ENCODE measurements at regions of chr19 and their contacts with region 1.

Region 1: GRCh38 chr19:4471403-4472173 is 509 bp upstream of the HDGFL2 start:
- DNase-seq: peak; percentile 98
- ATAC-seq: peak; percentile 90
- H3K4me3 Mint-ChIP-seq: no peak overlapping the region
- H3K27ac Mint-ChIP-seq: no peak overlapping the region
- H3K4me1 Mint-ChIP-seq: peaks cover 21% of the 10 kb centered on the region
- H3K27me3 Mint-ChIP-seq: no peaks in the 10 kb centered on the region

Region 2: DNA sequence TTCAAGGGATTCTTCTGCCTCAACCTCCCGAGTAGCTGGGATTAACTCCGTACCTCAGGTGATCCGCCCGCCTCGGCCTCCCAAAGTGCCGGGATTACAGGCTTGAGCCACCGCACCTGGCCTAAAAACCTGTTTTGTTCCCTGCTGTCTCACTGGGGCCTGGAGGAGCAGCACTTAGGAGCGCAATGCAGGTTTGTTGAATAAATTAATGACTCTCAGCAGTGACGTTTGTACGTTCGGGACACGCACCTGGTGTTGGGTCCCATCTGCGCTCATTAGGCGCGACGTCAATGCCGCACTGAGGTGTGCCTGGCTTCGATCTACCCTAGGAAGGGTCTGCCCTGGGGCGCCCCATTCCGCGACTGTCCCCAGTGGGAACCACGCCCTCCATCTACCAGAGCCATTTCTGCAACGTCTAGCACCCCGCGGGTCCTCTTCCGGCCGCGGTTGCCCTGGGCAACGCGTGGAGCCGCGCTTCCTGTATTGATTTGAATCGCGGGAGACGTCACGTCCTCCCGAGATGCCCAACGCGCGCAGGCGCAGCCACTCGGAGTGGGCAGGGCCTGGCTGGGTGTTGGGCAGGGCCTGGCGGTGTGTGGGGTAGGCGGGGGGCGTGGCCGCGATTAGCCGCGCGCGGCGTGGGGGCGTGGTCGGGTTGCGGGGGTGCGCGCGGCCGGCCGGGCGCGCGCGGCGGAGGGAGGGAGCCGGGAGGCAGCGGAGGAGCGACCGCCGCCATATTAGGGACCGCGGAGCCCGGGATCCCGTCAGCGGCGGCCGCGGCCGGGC is 965.8 kb before region 1 on chr19 and contains the start of gene FZR1:
- CTCF ChIA-PET with region 1: no interaction called
- POLR2A ChIA-PET with region 1: no interaction called
- intact Hi-C with region 1: loop called in 1 of 2 experiments (anchors 5 kb)
- DNase-seq: peak; percentile 100
- ATAC-seq: peak; percentile 92
- H3K4me3 Mint-ChIP-seq: peak within 1 kb of the TSS; percentile 84
- H3K27ac Mint-ChIP-seq: peak within 1 kb of the TSS; percentile 86
- H3K4me1 Mint-ChIP-seq: peaks cover 45% of the 10 kb centered on the region
- H3K27me3 Mint-ChIP-seq: no peaks in the 10 kb centered on the region
- total RNA-seq, gene FZR1: 40.8 to 50.7 TPM

Region 3: DNA sequence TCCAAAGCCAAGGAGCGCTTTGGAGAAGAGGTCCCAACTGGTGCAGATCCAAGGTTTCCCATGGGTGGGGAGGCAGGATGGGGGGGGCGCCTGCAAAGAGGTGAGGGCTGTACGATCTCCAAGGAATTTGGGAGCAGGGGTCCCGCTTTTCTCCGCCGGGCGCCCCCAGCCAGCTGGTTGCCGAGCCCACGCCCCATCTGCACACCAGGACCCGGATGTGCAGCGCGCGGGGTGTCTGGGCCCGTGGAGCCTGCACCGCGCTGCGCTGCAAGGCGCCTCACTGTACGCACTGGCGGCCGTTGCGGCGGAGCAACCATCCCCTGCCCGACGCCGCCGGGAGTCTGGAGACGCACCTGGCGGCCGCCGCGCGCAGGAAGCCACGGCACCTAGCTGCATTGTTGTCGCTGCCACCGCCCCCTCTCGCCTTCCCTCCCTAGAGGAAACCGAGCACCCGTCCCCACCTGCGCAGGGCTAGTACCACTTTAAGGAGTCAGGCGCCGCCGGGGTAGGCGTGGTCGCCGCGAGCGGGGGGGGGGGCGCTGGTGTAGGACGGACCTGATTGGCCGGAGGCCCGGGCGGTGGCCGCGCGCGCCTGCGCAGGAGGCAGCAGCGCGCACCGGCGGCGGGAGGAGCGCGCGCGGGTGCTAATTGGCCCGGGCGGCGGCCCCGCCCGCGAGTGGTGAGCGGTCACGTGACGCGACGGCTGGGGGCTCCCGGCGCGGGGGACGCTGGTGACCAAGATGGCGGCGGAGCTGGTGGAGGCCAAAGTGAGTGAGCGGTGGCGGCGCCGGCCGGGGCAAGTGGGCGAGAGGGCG is 464.4 kb before region 1 on chr19 and contains the start of gene PIAS4:
- CTCF ChIA-PET with region 1: no interaction called
- POLR2A ChIA-PET with region 1: no interaction called
- intact Hi-C with region 1: loop called in 1 of 2 experiments (anchors 1 kb)
- DNase-seq: peak; percentile 97
- ATAC-seq: peak; percentile 92
- H3K4me3 Mint-ChIP-seq: peak within 1 kb of the TSS; percentile 75
- H3K27ac Mint-ChIP-seq: peak within 1 kb of the TSS; percentile 71
- H3K4me1 Mint-ChIP-seq: peaks cover 27% of the 10 kb centered on the region
- H3K27me3 Mint-ChIP-seq: no peaks in the 10 kb centered on the region
- total RNA-seq, gene PIAS4: 23.0 to 37.3 TPM

Region 4: GRCh38 chr19:4342615-4343369 is 128.8 kb before region 1 on chr19:
- CTCF ChIA-PET with region 1: no interaction called
- POLR2A ChIA-PET with region 1: interaction called, 10 read pairs
- intact Hi-C with region 1: loop called in 1 of 2 experiments (anchors 1 kb)
- DNase-seq: peak; percentile 97
- ATAC-seq: peak; percentile 91
- H3K4me3 Mint-ChIP-seq: peak overlapping the region; percentile 89
- H3K27ac Mint-ChIP-seq: peak overlapping the region; percentile 93
- H3K4me1 Mint-ChIP-seq: peaks cover 17% of the 10 kb centered on the region
- H3K27me3 Mint-ChIP-seq: no peaks in the 10 kb centered on the region

Region 5: DNA sequence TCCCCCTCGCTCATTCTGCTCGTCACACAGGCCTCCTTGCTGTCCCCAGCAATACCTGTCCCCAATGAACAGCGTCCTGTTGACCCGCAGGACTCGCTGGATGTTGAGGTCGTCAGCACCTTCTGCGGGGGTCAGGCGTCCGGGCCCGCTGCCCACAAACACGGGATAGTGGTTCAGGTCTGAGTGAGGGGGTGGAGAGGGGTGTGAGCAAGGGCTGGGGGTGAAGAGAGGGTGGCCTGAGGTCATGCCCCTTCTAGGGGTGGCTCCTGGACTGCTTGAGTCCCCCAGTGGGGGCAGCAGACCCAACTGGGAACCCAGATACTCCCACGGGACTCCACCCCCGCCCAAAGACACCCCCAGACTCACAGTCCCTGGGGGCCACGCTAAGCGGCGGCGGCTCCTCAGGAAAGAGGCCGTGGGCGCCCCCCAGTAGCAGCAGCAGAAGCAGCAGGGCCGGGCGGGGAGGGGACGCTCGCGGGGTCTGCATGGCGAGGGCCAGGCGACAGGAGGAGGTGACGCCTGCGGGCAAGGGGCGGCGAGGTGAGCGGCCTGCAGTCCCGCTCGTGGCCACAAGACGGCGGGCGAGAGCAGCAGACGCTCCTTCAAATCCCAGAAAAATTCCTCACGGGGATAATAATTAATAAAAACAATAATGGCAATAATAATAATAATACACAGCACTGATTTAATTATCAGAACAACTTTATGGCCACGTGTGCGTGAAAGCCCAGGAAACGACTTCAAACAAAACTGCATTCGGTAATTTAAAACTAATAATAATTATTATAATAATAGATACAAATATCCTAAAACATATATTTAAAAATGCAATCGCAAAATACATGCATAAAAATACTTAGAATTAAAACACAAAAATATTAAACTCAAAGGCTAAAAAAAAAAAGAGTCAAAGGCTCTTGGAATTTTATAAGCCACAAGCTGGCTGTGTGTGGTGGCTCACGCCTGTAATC is 86.7 kb after region 1 on chr19:
- CTCF ChIA-PET with region 1: no interaction called
- POLR2A ChIA-PET with region 1: no interaction called
- intact Hi-C with region 1: no loop called
- DNase-seq: peak; percentile 66
- ATAC-seq: no peak
- H3K4me3 Mint-ChIP-seq: no peak overlapping the region
- H3K27ac Mint-ChIP-seq: no peak overlapping the region
- H3K4me1 Mint-ChIP-seq: no peaks in the 10 kb centered on the region
- H3K27me3 Mint-ChIP-seq: no peaks in the 10 kb centered on the region

Region 6: GRCh38 chr19:4684312-4685095 is 212.9 kb after region 1 on chr19:
- CTCF ChIA-PET with region 1: no interaction called
- POLR2A ChIA-PET with region 1: no interaction called
- intact Hi-C with region 1: no loop called
- DNase-seq: no peak
- ATAC-seq: no peak
- H3K4me3 Mint-ChIP-seq: no peak overlapping the region
- H3K27ac Mint-ChIP-seq: no peak overlapping the region
- H3K4me1 Mint-ChIP-seq: no peaks in the 10 kb centered on the region
- H3K27me3 Mint-ChIP-seq: no peaks in the 10 kb centered on the region

Region 7: GRCh38 chr19:4723367-4724187 is 252.0 kb after region 1 on chr19 and contains the start of gene DPP9:
- CTCF ChIA-PET with region 1: interaction called, 3 read pairs
- POLR2A ChIA-PET with region 1: interaction called, 4 read pairs
- intact Hi-C with region 1: loop called in 1 of 2 experiments (anchors 1 kb)
- DNase-seq: peak; percentile 98
- ATAC-seq: peak; percentile 95
- H3K4me3 Mint-ChIP-seq: peak within 1 kb of the TSS; percentile 92
- H3K27ac Mint-ChIP-seq: peak within 1 kb of the TSS; percentile 93
- H3K4me1 Mint-ChIP-seq: peaks cover 26% of the 10 kb centered on the region
- H3K27me3 Mint-ChIP-seq: no peaks in the 10 kb centered on the region
- total RNA-seq, gene DPP9: 49.2 to 51.3 TPM

Region 8: DNA sequence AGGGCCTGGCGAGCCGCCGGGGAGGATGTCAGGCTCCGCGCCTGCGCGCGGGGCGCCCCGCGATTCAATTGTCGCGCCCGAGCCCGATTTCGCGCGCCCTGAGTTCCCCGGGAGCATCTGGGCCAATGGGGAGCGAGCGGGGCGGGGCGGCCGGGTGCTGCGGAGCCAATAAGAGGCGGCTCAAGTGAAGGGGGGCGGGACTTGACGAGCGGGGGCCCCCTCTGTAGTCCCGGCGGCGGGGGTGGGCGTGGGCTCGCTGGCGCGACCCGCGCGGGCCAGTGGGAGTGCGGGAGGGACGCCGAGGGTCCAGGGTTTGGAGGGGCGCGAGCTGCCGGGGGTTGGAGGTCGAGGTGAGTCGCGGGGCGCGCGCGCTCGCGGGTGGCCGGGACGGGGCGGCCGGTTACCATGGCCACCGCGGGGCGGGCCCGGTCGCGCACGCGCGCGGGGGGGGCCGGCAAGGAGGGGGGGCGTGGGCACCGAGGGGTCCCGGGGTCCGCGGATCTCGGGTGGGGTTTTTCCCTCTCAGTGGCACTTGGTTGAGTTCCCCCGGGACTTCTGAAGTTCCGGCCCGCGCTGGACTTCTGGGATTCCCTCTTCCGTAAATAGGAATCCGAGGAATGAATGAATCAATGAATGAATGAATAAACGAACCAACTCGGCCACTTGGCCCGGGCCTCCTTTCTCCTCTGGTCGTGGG is 438.5 kb after region 1 on chr19:
- CTCF ChIA-PET with region 1: no interaction called
- POLR2A ChIA-PET with region 1: no interaction called
- intact Hi-C with region 1: loop called in 1 of 2 experiments (anchors 5 kb)
- DNase-seq: peak; percentile 98
- ATAC-seq: peak; percentile 78
- H3K4me3 Mint-ChIP-seq: peak overlapping the region; percentile 83
- H3K27ac Mint-ChIP-seq: peak overlapping the region; percentile 90
- H3K4me1 Mint-ChIP-seq: peaks cover 42% of the 10 kb centered on the region
- H3K27me3 Mint-ChIP-seq: no peaks in the 10 kb centered on the region

Region 9: GRCh38 chr19:5680437-5681368 is 1209.1 kb after region 1 on chr19 and contains the starts of genes HSD11B1L and MICOS13:
- CTCF ChIA-PET with region 1: no interaction called
- POLR2A ChIA-PET with region 1: no interaction called
- intact Hi-C with region 1: loop called in 1 of 2 experiments (anchors 5 kb)
- DNase-seq: peak; percentile 99
- ATAC-seq: peak; percentile 97
- H3K4me3 Mint-ChIP-seq: peak within 1 kb of the TSS; percentile 99
- H3K27ac Mint-ChIP-seq: peak within 1 kb of the TSS; percentile 94
- H3K4me1 Mint-ChIP-seq: peaks cover 20% of the 10 kb centered on the region
- H3K27me3 Mint-ChIP-seq: no peaks in the 10 kb centered on the region
- total RNA-seq, gene HSD11B1L: 2.0 to 3.2 TPM
- total RNA-seq, gene MICOS13: 50.9 to 52.1 TPM